ENCODE measurements at regions of chr5 and their contacts with region 1.

Region 1: GRCh38 chr5:148090773-148091221 is 27.0 kb downstream of the SPINK5 start:
- DNase-seq: peak; percentile 88
- ATAC-seq: peak; percentile 85
- H3K4me3 ChIP-seq: peak overlapping the region; percentile 47
- H3K27ac ChIP-seq: peak overlapping the region; percentile 11
- H3K4me1 ChIP-seq: peaks cover 22% of the 10 kb centered on the region
- H3K27me3 ChIP-seq: no peaks in the 10 kb centered on the region
- CTCF ChIP-seq: no peak

Region 2: GRCh38 chr5:147972076-147972840 is 118.5 kb before region 1 on chr5:
- CTCF ChIA-PET with region 1: no interaction called
- POLR2A ChIA-PET with region 1: no interaction called
- intact Hi-C with region 1: no loop called
- DNase-seq: peak; percentile 50
- ATAC-seq: peak; percentile 78
- H3K4me3 ChIP-seq: no peak overlapping the region
- H3K27ac ChIP-seq: no peak overlapping the region
- H3K4me1 ChIP-seq: peaks cover 11% of the 10 kb centered on the region
- H3K27me3 ChIP-seq: no peaks in the 10 kb centered on the region
- CTCF ChIP-seq: no peak

Region 3: DNA sequence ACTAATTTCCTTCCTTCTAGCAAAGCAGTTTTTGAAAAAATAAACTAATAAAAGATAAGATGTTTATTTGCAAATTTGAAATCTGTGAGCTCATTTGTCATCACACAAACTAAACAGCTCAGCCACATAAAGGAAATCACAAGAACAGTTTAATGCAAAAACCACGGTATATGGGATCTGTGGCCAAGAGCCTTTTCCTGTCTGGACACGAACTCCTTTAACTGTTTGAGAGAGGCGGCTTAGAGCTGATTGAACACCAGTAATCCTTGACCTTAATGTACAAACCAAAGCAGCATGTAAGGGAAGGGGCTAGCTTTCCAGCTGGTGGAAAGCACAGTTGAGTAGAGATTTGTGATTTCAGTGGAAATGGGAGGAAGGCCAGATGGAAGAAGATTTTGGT is 93.3 kb before region 1 on chr5:
- CTCF ChIA-PET with region 1: no interaction called
- POLR2A ChIA-PET with region 1: no interaction called
- intact Hi-C with region 1: loop called (anchors 5 kb)
- DNase-seq: no peak
- ATAC-seq: no peak
- H3K4me3 ChIP-seq: no peak overlapping the region
- H3K27ac ChIP-seq: no peak overlapping the region
- H3K4me1 ChIP-seq: peaks cover 18% of the 10 kb centered on the region
- H3K27me3 ChIP-seq: no peaks in the 10 kb centered on the region
- CTCF ChIP-seq: no peak

Region 4: GRCh38 chr5:148011401-148012132 is 79.2 kb before region 1 on chr5:
- CTCF ChIA-PET with region 1: no interaction called
- POLR2A ChIA-PET with region 1: no interaction called
- intact Hi-C with region 1: loop called (anchors 2 kb)
- DNase-seq: peak; percentile 98
- ATAC-seq: peak; percentile 94
- H3K4me3 ChIP-seq: peak overlapping the region; percentile 14; the same call in 1 of the 2 replicates
- H3K27ac ChIP-seq: peak overlapping the region; percentile 73
- H3K4me1 ChIP-seq: peaks cover 41% of the 10 kb centered on the region
- H3K27me3 ChIP-seq: no peaks in the 10 kb centered on the region
- CTCF ChIP-seq: no peak